Mammary epithelial cell (primary cell): ENCODE measurements at regions of chr1 and their contacts with region 1.

Region 1: DNA sequence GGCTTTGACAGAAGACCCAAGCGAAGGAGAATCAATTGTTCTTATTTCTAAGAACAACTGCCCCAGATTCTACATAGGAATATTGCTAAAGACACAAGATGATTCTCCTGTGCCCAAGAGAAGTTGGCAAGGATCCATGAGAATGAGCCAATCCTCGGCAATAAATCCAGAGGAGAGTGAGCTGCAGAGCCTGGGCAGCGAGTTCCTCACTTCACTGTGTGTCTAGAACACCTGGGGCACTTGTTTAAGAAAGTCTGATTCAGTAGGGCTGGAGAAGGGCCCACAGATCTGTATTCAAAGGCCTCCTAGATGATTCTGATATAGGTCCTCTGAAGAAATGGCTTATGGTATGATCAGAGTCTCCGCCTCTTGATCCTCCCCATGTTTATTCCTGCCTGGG is 31.8 kb downstream of the GADD45A start:
- DNase-seq: peak; percentile 83
- H3K4me3 ChIP-seq: no peak overlapping the region
- H3K27ac ChIP-seq: peak overlapping the region; percentile 32
- H3K4me1 ChIP-seq: peaks cover 44% of the 10 kb centered on the region
- H3K27me3 ChIP-seq: no peaks in the 10 kb centered on the region
- CTCF ChIP-seq: no peak

Region 2: DNA sequence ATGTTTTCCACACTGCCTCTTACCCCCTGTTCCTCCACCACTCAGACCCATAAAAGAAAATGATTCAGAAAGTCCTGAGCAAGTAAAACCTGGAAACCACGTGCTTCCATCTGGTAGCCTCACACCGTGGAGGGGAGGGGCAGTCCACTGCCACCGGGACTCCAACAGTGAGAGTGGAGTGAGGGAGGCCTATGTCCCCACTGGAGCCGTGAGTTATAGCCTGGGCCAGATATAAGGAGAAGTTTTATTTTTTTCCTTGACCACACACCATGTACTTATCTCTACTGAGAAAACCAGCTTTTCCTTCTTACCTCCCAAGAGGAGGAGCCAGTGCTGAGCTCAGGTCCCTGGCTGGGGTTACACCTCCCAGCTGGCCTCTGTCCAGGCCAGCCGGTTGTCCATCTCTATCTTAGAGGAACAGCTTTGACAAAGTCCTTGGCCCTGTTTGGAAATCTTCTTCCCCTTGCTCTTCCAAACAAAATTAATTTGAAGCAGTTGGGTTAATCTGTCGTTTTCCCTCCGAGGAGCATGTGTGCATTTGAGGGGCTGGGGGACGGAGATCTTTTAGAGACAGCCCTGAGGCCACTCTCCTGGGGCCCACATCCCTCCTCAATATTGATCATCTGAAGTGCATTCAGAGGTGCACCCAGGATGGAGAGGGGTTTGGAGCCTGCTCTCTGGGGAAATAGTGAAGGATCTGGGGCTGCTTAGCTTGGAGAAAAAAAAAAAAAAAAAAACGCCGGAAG is 237.5 kb before region 1 on chr1:
- CTCF ChIA-PET with region 1: no interaction called
- dilution Hi-C with region 1: no loop called
- in situ Hi-C with region 1: no loop called
- intact Hi-C with region 1: no loop called
- DNase-seq: peak; percentile 36
- H3K4me3 ChIP-seq: no peak overlapping the region
- H3K27ac ChIP-seq: no peak overlapping the region
- H3K4me1 ChIP-seq: no peaks in the 10 kb centered on the region
- H3K27me3 ChIP-seq: peaks cover 2% of the 10 kb centered on the region
- CTCF ChIP-seq: no peak

Region 3: DNA sequence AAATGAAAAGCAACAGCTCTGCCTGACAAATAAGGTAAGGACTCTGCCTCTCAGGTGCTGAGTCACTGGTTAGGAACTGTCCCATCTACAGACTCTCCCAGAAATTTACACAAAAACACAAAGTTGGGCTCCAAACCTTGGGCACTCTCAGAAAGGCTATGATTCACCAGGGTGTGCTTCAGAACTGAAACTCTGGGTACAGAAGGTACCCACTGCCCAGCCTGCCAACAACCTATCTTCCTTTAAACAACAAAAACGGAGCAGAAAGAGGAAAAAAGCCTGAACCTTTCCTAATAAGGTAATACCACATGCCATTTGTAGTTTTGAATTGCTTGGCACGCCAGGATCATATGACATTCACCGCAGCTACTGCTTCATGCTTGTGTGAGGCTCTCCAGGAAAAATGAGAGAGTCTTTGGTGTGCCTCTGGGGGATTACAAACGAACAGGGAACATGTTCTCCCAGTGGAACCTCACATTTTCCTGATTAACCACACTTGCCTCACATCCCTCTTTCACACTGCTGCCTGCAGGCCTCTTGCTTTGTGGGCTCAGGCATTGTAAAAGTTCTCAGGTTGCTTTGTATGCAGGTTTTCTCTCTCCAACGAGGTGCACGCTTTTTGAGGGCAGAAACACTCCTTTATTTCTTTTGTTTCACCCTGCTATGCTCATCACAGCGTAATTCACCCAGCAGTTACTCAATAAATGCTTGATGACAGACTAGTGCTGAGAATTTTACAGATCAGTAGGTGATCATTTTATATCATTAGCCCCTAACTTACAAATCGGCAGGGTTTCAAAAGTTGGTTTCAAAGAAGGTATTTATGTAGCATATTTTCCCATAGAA is 33.3 kb after region 1 on chr1:
- CTCF ChIA-PET with region 1: no interaction called
- dilution Hi-C with region 1: no loop called
- in situ Hi-C with region 1: no loop called
- intact Hi-C with region 1: loop called (anchors 2 kb)
- DNase-seq: peak; percentile 98
- H3K4me3 ChIP-seq: peak overlapping the region; percentile 19 to 30 (median 21)
- H3K27ac ChIP-seq: peak overlapping the region; percentile 100
- H3K4me1 ChIP-seq: peaks cover 81% of the 10 kb centered on the region
- H3K27me3 ChIP-seq: no peaks in the 10 kb centered on the region
- CTCF ChIP-seq: no peak

Region 4: GRCh38 chr1:67760030-67760821 is 43.4 kb after region 1 on chr1:
- CTCF ChIA-PET with region 1: interaction called, 4 read pairs
- dilution Hi-C with region 1: no loop called
- in situ Hi-C with region 1: no loop called
- intact Hi-C with region 1: loop called (anchors 2 kb)
- DNase-seq: peak; percentile 81
- H3K4me3 ChIP-seq: no peak overlapping the region
- H3K27ac ChIP-seq: peak overlapping the region; percentile 91
- H3K4me1 ChIP-seq: peaks cover 37% of the 10 kb centered on the region
- H3K27me3 ChIP-seq: no peaks in the 10 kb centered on the region
- CTCF ChIP-seq: peak; percentile 73 to 77